ENCODE measurements at regions of chr2 and their contacts with region 1.

Region 1: DNA sequence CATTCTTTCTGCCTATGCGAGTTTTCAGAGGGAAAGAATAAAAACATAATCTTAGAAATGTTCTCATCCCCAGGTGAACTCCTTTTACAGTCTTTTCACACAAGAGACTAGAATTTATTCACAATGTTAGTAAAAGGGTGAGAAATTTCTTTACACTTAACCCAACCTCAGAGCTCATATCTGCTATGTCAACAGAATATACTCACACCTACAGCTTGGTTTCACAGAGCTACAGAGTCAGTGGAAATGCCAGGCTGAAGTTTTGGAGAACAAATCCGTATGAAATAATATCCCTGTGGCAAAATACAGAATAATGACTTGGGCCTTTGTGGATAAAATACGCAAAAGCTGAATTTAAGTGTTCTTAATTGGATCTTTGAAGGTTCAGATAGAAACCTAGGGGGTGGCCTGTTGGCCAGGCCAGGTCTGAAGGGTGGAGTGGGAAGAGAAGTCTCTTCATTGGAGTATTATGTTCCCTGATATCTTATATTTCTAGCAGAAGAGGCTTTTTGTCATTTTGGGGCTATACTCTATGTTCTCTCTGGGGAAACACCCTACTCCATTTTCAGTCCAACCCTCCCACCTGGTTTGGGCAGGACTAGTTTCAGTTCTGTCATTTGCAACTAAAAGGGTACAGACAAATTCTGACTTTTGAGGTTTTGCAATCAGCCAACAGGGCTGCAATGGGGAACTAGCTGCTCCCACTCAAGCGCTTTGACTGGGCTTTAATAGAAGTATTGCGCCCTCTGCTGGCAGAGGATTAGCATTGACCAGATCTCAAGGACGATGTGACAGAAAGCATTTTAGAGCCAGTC is 25.7 kb downstream of the FBXO48 start:
- DNase-seq: peak; percentile 71 to 90 (median 81)
- H3K4me3 ChIP-seq: no peak overlapping the region
- H3K4me3 Mint-ChIP-seq: peak overlapping the region; percentile 5 to 82 (median 75)
- H3K27ac ChIP-seq: peak overlapping the region; percentile 41
- H3K27ac Mint-ChIP-seq: peak overlapping the region; percentile 90 to 99 (median 97)
- H3K4me1 ChIP-seq: peaks cover 13% of the 10 kb centered on the region
- H3K4me1 Mint-ChIP-seq: peaks cover 27 to 39% (median 36%) of the 10 kb centered on the region in 3 donors
- H3K27me3 ChIP-seq: no peaks in the 10 kb centered on the region
- H3K27me3 Mint-ChIP-seq: peaks cover 0 to 2% of the 10 kb centered on the region in 2 donors

Region 2: GRCh38 chr2:68121873-68122679 is 319.3 kb before region 1 on chr2:
- CTCF ChIA-PET with region 1: interaction called, 14 read pairs
- POLR2A ChIA-PET with region 1: no interaction called
- DNase-seq: peak; percentile 45 to 80 (median 71)
- H3K4me3 ChIP-seq: no peak overlapping the region
- H3K4me3 Mint-ChIP-seq: peak overlapping the region in 2 of 7 donors; percentile 35 to 39
- H3K27ac ChIP-seq: no peak overlapping the region
- H3K27ac Mint-ChIP-seq: peak overlapping the region in 1 of 8 donors; percentile 23
- H3K4me1 ChIP-seq: peaks cover 8% of the 10 kb centered on the region
- H3K4me1 Mint-ChIP-seq: peaks cover 5 to 15% (median 10%) of the 10 kb centered on the region in 3 donors
- H3K27me3 ChIP-seq: no peaks in the 10 kb centered on the region
- H3K27me3 Mint-ChIP-seq: peaks cover 5% of the 10 kb centered on the region in 2 donors

Region 3: DNA sequence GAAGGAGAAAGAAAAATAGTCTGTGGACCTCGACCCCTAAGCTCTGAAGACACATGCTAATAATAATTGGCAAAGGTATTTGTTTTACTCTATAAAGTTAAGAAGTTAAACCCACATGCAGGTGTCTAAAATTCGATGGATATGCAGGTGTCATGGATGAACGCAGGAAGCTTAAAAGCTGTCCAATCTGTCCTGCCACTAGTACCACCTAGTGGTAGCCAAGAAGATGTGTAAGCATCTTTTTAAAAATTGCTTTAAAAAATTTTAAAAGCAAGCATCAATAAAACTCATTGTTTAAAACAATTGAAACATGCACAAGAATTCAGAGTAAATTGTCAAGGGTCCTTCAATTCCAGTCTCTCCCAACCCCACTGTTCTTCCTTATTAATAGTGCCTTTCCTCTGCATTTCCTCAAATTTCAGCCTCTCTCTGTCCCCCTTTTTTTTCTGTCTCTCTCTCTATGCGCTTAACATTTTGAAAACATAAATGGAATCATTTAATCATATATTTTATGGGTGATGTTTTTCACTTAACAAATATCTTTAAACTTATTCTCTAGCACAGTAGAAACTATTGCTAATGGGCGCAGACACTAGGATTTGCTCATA is 158.5 kb before region 1 on chr2:
- CTCF ChIA-PET with region 1: interaction called, 14 read pairs
- POLR2A ChIA-PET with region 1: no interaction called
- DNase-seq: peak in 3 of 5 donors; percentile 2 to 40 (median 40)
- H3K4me3 ChIP-seq: no peak overlapping the region
- H3K4me3 Mint-ChIP-seq: no peak overlapping the region
- H3K27ac ChIP-seq: no peak overlapping the region
- H3K27ac Mint-ChIP-seq: no peak overlapping the region
- H3K4me1 ChIP-seq: peaks cover 4% of the 10 kb centered on the region
- H3K4me1 Mint-ChIP-seq: peaks cover 0 to 7% (median 0%) of the 10 kb centered on the region in 3 donors
- H3K27me3 ChIP-seq: no peaks in the 10 kb centered on the region
- H3K27me3 Mint-ChIP-seq: peaks cover 11 to 27% of the 10 kb centered on the region in 2 donors

Region 4: DNA sequence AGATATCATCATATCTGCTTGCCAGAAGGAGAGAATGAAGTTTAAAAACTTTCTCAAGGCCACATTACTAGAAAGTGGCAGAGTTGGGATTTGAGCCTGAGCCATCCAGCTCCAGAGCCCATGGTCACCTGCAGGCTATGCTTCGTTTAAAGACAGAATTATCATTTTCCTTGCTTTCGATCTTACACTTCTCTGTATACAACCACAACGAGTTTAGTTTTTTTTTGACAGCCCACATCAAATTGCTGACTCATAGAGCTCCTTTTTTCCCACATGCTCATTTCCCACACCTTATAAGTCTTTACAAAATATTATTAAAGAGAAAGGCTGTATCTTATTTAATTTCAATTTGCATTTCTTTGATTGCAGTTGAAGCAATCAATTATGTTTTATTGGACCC is 69.8 kb before region 1 on chr2:
- CTCF ChIA-PET with region 1: interaction called, 16 read pairs
- POLR2A ChIA-PET with region 1: no interaction called
- DNase-seq: peak in 1 of 5 donors; percentile 26
- H3K4me3 ChIP-seq: peak overlapping the region; percentile 45
- H3K4me3 Mint-ChIP-seq: peak overlapping the region; percentile 33 to 78 (median 67)
- H3K27ac ChIP-seq: no peak overlapping the region
- H3K27ac Mint-ChIP-seq: peak overlapping the region; percentile 0 to 88 (median 72)
- H3K4me1 ChIP-seq: peaks cover 34% of the 10 kb centered on the region
- H3K4me1 Mint-ChIP-seq: peaks cover 71 to 88% (median 84%) of the 10 kb centered on the region in 3 donors
- H3K27me3 ChIP-seq: no peaks in the 10 kb centered on the region
- H3K27me3 Mint-ChIP-seq: peaks cover 0 to 1% of the 10 kb centered on the region in 2 donors

Region 5: DNA sequence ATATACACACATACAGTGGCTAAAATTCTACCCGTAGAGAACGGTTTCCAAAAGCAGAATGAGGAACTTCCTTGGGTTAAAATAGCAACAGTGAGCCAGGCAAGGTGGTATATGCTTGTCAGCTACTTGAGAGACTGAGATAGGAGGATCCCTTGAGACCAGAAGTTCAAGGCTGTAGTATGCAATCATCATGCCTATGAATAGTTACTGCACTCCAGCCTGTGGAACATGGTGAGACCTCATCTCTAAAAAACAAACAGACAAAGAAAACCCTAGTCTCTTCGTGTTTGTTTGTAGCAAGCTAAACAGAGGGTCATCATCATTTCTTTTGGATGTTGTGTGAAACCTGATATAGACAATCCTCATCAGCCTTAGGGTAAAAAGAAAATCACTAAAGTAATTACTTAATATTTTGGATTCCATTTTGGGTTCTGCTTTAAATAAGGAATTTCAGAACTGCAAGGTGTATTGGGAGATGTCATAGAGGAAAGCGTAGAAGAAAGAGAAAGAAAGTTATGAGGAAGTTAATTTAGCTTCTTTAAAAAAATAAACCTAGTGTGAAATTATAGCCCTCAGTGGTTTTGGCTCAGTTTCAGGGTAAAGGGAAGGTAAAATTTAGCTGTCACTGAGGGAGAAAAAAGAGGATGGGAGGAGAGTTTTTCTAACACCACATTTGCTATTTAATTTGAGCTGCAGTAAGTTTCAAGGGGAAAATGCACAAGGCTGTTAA is 29.8 kb before region 1 on chr2:
- CTCF ChIA-PET with region 1: interaction called, 13 read pairs
- POLR2A ChIA-PET with region 1: interaction called, 6 read pairs
- DNase-seq: peak in 1 of 5 donors; percentile 6
- H3K4me3 ChIP-seq: no peak overlapping the region
- H3K4me3 Mint-ChIP-seq: peak overlapping the region; percentile 7 to 66 (median 60)
- H3K27ac ChIP-seq: no peak overlapping the region
- H3K27ac Mint-ChIP-seq: peak overlapping the region; percentile 13 to 81 (median 66)
- H3K4me1 ChIP-seq: peaks cover 29% of the 10 kb centered on the region
- H3K4me1 Mint-ChIP-seq: peaks cover 37 to 77% (median 73%) of the 10 kb centered on the region in 3 donors
- H3K27me3 ChIP-seq: no peaks in the 10 kb centered on the region
- H3K27me3 Mint-ChIP-seq: no peaks in the 10 kb centered on the region

Region 6: DNA sequence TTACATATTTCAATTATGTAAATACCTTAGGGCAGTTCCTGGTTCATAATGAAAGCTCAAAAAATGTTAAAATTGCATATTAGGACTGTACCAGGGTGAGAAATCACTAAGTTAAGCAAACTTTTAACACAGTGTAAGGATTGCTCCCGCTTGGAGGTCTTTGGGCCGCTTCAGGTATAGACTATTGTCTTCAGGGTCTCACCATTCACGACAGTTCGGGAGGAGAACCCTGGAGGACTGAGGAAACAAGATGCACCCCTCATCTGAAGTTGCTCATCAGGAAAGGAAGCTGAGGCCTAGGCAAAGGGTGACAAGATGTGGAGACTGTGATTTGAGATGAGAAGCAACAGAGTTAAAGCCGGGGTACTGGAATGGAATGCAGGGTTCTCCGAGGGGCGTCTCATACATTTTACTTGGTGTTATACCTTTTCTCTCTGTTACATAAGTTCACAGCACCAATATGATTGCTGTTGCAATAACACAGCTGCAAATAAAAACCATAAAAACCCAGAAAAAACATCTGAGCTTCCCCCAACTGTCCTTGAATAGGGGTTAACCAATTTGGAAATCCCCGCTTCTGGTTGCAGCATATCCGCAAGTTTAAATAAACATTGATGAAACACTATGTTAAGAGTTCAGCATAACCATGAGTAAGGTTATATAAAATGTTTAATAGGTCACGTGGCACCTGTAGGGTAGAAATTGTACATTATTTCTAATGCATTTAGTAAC is 14.4 kb before region 1 on chr2:
- CTCF ChIA-PET with region 1: interaction called, 37 read pairs
- POLR2A ChIA-PET with region 1: interaction called, 8 read pairs
- DNase-seq: peak in 2 of 5 donors; percentile 59 to 62
- H3K4me3 ChIP-seq: no peak overlapping the region
- H3K4me3 Mint-ChIP-seq: peak overlapping the region; percentile 0 to 74 (median 57)
- H3K27ac ChIP-seq: peak overlapping the region; percentile 17
- H3K27ac Mint-ChIP-seq: peak overlapping the region; percentile 75 to 98 (median 95)
- H3K4me1 ChIP-seq: peaks cover 50% of the 10 kb centered on the region
- H3K4me1 Mint-ChIP-seq: peaks cover 3 to 23% (median 8%) of the 10 kb centered on the region in 3 donors
- H3K27me3 ChIP-seq: no peaks in the 10 kb centered on the region
- H3K27me3 Mint-ChIP-seq: no peaks in the 10 kb centered on the region

Region 7: DNA sequence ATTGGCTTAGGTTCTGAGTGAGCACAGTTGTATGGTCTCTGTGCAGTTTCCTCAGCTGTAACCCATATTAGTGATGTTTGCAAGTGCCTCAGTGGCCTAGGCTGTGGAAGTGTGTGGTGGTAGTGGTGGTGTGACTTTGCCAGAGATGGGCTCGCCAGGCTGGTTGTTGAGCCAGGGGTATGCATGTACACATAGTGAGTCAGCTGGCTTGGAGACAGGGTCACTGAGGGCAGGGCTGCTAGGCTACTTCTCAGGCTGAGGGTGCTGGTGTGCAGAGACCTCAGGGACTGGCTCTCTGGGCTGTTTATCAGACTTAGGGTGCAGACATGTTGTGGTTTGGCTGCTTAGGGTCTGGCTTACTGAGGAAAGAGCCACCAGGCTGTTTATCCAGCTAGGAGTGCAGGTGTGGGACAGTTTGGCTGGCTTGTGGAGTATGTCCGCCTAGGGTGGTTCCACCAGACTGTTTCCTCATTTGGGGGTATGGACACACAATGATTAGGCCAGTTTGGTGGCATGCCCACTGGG is 41.0 kb after region 1 on chr2:
- CTCF ChIA-PET with region 1: no interaction called
- POLR2A ChIA-PET with region 1: no interaction called
- DNase-seq: no peak
- H3K4me3 ChIP-seq: no peak overlapping the region
- H3K4me3 Mint-ChIP-seq: no peak overlapping the region
- H3K27ac ChIP-seq: no peak overlapping the region
- H3K27ac Mint-ChIP-seq: no peak overlapping the region
- H3K4me1 ChIP-seq: no peaks in the 10 kb centered on the region
- H3K4me1 Mint-ChIP-seq: peaks cover 0 to 2% (median 0%) of the 10 kb centered on the region in 3 donors
- H3K27me3 ChIP-seq: no peaks in the 10 kb centered on the region
- H3K27me3 Mint-ChIP-seq: peaks cover 0 to 2% of the 10 kb centered on the region in 2 donors

Measured in CD8-positive, alpha-beta memory T cell (primary cell).